ENCODE measurements at regions of chr10 and their contacts with region 1.

Region 1: GRCh38 chr10:97534746-97535367 is 36.1 kb downstream of the UBTD1 start:
- DNase-seq: peak; percentile 68
- ATAC-seq: peak; percentile 82
- H3K4me3 Mint-ChIP-seq: no peak overlapping the region
- H3K27ac Mint-ChIP-seq: peak overlapping the region; percentile 86
- H3K4me1 Mint-ChIP-seq: peaks cover 15% of the 10 kb centered on the region
- H3K27me3 Mint-ChIP-seq: no peaks in the 10 kb centered on the region
- CTCF ChIP-seq: peak; percentile 69

Region 2: DNA sequence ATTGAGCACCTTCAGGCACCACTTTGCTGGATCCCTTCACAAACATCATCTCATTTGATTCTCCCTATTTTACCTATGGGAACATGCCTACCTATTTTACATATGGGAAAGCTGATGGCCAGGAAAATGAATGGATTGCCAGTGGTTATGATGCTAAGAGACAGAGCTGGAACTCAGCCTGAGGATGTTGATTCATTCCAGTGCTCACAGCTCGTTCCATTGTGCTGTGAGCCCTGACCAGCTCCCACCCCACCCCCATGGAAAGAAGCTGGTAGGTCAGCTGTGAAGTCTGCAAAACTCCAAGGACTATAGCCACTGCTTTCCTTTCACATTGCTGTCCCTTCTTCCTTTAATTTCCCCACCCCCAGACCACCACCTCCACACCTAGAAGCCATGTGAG is 26.5 kb before region 1 on chr10:
- CTCF ChIA-PET with region 1: interaction called, 12 read pairs
- POLR2A ChIA-PET with region 1: interaction called, 3 read pairs
- DNase-seq: no peak
- ATAC-seq: peak; percentile 76
- H3K4me3 Mint-ChIP-seq: no peak overlapping the region
- H3K27ac Mint-ChIP-seq: 0 out of 2 replicates have a peak overlapping the region, but pooled peaks have one; percentile 64
- H3K4me1 Mint-ChIP-seq: peaks cover 24% of the 10 kb centered on the region
- H3K27me3 Mint-ChIP-seq: no peaks in the 10 kb centered on the region
- CTCF ChIP-seq: no peak

Region 3: DNA sequence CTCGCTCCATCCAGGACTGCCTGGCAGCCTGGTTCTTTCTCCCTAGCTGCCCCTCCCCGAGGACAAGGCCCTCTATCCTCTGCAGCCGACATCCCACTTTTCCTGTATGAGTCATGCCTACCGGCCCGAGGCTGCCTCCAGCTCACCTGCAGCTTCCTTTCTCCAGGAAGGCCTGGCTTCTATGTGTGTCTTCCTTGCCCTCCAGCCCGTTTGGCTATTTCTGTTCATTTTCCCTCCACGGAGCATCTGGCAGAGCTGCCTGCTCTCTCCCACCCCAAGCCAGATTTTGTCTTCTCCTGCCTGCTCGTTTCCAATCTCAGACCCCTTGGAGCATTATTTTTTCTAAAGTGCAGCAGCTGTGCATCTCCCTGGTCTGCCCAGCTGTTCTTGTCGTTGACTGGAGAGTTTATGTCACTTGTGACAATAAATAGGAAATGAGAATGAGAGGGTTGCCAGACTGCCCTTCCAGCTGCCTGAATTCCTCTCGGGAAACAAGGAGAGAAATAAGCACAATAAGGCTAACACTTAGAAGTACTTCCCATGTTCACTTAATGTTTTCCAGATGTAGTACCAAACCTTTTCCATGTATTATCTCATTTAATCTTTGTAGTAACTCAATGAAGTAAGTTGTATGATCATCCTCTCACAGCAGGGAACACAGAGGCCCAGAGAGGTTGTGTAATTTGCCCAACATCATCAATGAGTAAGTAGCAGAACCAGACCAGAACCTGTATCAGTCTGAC is 16.4 kb before region 1 on chr10:
- CTCF ChIA-PET with region 1: interaction called, 47 read pairs
- POLR2A ChIA-PET with region 1: no interaction called
- DNase-seq: no peak
- ATAC-seq: peak; percentile 56
- H3K4me3 Mint-ChIP-seq: no peak overlapping the region
- H3K27ac Mint-ChIP-seq: peak overlapping the region; percentile 55; the same call in 1 of the 2 replicates
- H3K4me1 Mint-ChIP-seq: peaks cover 43% of the 10 kb centered on the region
- H3K27me3 Mint-ChIP-seq: no peaks in the 10 kb centered on the region; the same call in 1 of the 2 replicates
- CTCF ChIP-seq: no peak

Region 4: DNA sequence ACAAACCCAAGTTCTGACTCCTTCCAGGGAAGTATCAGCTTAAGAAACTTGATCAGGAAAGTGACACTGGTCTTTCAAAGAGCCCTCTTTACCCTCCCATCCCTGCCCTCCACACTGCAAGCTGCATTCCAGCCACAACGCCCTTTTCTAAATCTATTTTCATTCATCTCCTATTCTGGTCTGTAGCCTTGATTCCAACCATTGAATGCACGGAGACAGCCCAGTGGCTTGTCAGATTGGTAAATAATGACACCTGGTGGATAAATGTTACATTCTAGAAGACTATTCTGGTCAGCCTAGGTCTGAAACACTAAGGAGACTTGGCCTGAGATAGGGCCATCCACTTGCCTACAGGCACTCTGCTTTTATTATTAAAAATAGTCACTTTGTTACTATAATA is 77.5 kb after region 1 on chr10:
- CTCF ChIA-PET with region 1: interaction called, 15 read pairs
- POLR2A ChIA-PET with region 1: no interaction called
- DNase-seq: no peak
- ATAC-seq: peak; percentile 86
- H3K4me3 Mint-ChIP-seq: no peak overlapping the region
- H3K27ac Mint-ChIP-seq: no peak overlapping the region; the same call in 1 of the 2 replicates
- H3K4me1 Mint-ChIP-seq: peaks cover 14% of the 10 kb centered on the region
- H3K27me3 Mint-ChIP-seq: no peaks in the 10 kb centered on the region
- CTCF ChIP-seq: no peak